Thyroid gland (tissue), 4 donors: ENCODE measurements at regions of chr18 and their contacts with region 1.

Region 1: DNA sequence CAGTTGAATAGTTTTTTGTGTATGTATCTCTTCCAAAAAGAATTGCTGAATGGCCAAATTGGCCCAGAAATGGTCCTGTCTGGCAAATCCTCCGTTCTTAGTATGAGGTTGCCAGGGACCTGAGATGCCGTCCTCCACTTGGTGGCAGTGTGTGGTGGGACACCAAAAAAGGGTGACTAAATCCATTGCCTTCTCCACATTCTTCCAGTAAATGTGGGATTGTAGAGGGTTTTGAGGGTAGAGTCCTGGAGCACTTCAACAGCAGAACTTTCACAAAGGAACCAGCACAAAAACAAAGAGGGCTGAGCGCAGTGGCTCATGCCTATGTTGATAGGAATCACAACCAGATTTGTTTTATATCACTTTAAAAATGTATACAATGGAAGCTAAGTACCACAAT is 199.9 kb downstream of the BCL2 start:
- DNase-seq: peak; percentile 68 to 70
- H3K4me3 ChIP-seq: no peak overlapping the region
- H3K27ac ChIP-seq: no peak overlapping the region
- H3K4me1 ChIP-seq: peaks cover 4 to 6% of the 10 kb centered on the region in 2 donors
- H3K27me3 ChIP-seq: no peaks in the 10 kb centered on the region
- CTCF ChIP-seq: peak in 4 of 6 experiments; percentile 43 to 70 (median 62)
- POLR2A ChIP-seq: no peak

Region 2: GRCh38 chr18:63439334-63439733 is 319.7 kb after region 1 on chr18:
- intact Hi-C with region 1: loop called (anchors 10 kb)
- DNase-seq: peak; percentile 30 to 37
- H3K4me3 ChIP-seq: no peak overlapping the region
- H3K27ac ChIP-seq: no peak overlapping the region
- H3K4me1 ChIP-seq: peaks cover 0 to 8% of the 10 kb centered on the region in 2 donors
- H3K27me3 ChIP-seq: no peaks in the 10 kb centered on the region
- CTCF ChIP-seq: peak; percentile 33 to 89 (median 76)
- POLR2A ChIP-seq: no peak